Heart right ventricle (tissue), 16 donors: ENCODE measurements at regions of chr5 and their contacts with region 1.

Region 1: GRCh38 chr5:108345541-108346171 is 36.2 kb downstream of the FBXL17 start:
- DNase-seq: no peak
- ATAC-seq: no peak
- H3K4me3 ChIP-seq: no peak overlapping the region
- H3K27ac ChIP-seq: no peak overlapping the region
- H3K4me1 ChIP-seq: peaks cover 0 to 18% (median 0%) of the 10 kb centered on the region in 9 donors
- H3K27me3 ChIP-seq: no peaks in the 10 kb centered on the region
- CTCF ChIP-seq: peak in 7 of 9 donors; percentile 18 to 62 (median 52)

Region 2: DNA sequence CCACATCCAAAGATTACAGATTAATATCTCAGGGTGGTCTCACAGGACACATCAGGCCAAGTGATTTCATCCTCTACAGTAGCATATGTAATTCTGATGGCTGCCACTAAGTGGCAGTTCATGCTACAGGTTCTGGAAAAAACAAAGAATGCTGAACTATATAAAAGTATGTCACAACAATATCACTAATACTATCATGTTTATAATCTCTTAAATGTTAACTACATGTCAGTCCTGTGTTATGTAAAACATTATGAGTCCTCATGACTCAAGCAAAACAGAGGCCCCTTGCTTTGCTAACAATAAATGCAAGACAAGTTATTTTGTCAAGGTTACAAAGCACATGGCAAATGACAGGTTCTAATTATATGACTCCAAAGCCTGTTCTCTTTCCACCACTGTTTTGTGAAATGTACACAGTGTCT is 196.9 kb before region 1 on chr5:
- intact Hi-C with region 1: loop called in 1 of 10 experiments (anchors 10 kb)
- DNase-seq: no peak
- ATAC-seq: peak in 5 of 8 donors; percentile 42 to 87 (median 48)
- H3K4me3 ChIP-seq: no peak overlapping the region
- H3K27ac ChIP-seq: no peak overlapping the region
- H3K4me1 ChIP-seq: peaks cover 0 to 6% (median 0%) of the 10 kb centered on the region in 9 donors
- H3K27me3 ChIP-seq: no peaks in the 10 kb centered on the region
- CTCF ChIP-seq: peak; percentile 19 to 61 (median 46)

Region 3: DNA sequence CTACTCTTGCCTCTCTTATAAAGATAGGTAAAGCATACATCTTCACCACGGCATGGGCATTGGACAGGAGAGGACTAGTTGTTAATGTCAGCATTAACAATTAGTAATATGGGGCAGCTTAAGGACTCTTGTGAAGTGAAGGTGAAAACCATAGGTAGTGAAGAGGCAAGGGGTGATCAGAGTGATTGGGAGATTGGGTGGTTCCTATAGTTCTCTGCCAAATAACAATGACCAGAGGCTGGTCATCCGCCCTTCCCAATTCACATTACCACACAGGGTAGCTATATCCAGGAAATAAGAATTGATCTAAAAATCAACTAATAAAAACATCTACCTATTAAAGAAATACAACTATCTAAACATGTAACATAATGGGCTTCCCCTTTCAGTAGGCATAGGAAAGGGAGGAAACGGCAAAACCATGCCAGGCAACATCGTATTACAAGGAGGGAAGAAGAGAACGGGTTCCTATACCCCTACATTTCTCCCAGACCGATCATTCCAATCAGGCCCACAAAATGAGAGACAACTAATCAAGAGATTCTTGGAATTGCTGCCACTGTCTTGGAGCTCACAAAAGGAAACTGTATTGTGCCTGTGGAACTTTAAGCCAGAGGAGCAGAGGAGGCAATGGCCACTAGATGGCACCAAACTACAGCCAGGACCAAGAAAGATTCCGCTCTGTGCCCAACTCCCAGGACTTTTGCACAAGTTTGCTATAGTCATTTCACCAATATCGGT is 85.4 kb before region 1 on chr5:
- intact Hi-C with region 1: loop called in 8 of 10 experiments (anchors 1 to 10 kb)
- DNase-seq: peak; percentile 33 to 78
- ATAC-seq: peak; percentile 83 to 96 (median 94)
- H3K4me3 ChIP-seq: peak overlapping the region in 3 of 10 donors; percentile 13 to 29 (median 27)
- H3K27ac ChIP-seq: no peak overlapping the region
- H3K4me1 ChIP-seq: peaks cover 0 to 27% (median 18%) of the 10 kb centered on the region in 9 donors
- H3K27me3 ChIP-seq: no peaks in the 10 kb centered on the region
- CTCF ChIP-seq: peak; percentile 89 to 97 (median 94)

Region 4: DNA sequence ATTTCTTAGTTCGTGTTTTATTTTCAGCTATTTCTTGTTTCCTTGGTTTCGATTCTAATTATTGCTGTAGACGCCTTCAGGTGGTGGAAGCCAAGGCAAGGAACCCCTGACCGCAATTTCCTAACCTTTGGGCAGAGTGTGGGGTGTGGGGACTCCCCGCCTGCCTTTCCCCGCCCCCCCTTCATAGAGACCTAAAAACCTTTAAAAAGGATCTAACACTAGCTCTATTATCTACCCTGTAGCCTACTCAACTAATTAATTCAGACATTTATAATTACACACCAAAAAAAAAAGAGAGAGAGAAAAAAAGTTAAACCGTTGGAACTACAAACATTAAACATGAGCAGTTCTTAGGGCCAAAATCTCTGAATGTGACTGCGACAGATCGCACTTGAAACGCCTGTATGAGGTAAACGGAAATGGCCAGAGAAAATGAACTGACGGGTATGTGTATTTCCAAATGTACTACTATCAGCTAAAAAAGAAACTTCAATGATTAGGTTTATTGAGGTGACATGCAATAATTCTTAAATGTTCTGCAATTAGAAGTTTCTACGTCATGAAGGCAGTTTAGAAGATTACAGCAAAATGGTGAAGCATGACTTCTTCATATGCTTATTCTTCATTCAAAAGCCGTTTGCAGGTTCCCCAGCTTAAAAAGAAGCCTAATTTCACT is 383.0 kb after region 1 on chr5:
- intact Hi-C with region 1: no loop called
- DNase-seq: no peak
- ATAC-seq: peak in 1 of 8 donors; percentile 19
- H3K4me3 ChIP-seq: peak overlapping the region; percentile 74 to 98 (median 88)
- H3K27ac ChIP-seq: peak overlapping the region; percentile 72 to 97 (median 94)
- H3K4me1 ChIP-seq: peaks cover 0 to 36% (median 6%) of the 10 kb centered on the region in 9 donors
- H3K27me3 ChIP-seq: no peaks in the 10 kb centered on the region
- CTCF ChIP-seq: no peak